Heart right ventricle (tissue), 16 donors: ENCODE measurements at regions of chr7 and their contacts with region 1.

Region 1: GRCh38 chr7:82234457-82235049 is 209.0 kb downstream of the CACNA2D1 start:
- DNase-seq: no peak
- ATAC-seq: peak in 2 of 8 donors; percentile 24 to 38
- H3K4me3 ChIP-seq: no peak overlapping the region
- H3K27ac ChIP-seq: peak overlapping the region in 1 of 10 donors; percentile 28
- H3K4me1 ChIP-seq: peaks cover 0 to 30% (median 11%) of the 10 kb centered on the region in 9 donors
- H3K27me3 ChIP-seq: no peaks in the 10 kb centered on the region
- CTCF ChIP-seq: peak; percentile 46 to 74 (median 55)

Region 2: DNA sequence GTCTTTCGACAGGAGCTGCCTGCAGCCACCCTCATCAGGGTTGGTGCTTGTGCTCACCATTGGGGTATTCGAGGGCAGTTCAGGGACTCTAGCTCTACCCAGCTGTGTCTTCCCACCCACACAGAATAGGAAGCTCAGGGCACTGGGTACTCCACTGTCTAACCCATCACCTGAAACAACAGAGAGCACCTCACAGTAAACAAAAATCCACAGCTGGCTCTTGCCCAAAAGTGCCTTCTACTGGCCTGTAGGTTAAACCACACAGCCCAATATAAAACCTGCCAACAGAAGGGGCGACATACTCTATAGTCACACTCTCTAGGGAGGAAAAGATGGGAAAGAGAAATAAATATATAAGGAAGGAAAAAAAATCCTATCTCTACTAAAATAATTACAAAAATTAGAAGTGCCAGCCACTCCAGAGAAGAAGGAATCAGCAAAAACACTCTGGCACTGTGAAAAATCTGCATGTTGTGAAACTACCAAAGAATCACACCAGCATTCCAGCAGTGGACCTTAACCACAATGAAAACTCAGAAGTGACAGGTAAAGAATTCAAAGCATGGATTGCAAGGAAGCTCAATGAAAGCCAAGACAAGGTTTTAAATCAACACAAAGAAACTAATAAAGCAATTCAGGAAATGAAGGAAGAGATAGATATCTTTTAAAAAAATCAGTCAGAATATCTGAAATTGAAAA is 574.7 kb before region 1 on chr7:
- intact Hi-C with region 1: no loop called
- DNase-seq: no peak
- ATAC-seq: no peak
- H3K4me3 ChIP-seq: no peak overlapping the region
- H3K27ac ChIP-seq: no peak overlapping the region
- H3K4me1 ChIP-seq: no peaks in the 10 kb centered on the region
- H3K27me3 ChIP-seq: no peaks in the 10 kb centered on the region
- CTCF ChIP-seq: no peak

Region 3: DNA sequence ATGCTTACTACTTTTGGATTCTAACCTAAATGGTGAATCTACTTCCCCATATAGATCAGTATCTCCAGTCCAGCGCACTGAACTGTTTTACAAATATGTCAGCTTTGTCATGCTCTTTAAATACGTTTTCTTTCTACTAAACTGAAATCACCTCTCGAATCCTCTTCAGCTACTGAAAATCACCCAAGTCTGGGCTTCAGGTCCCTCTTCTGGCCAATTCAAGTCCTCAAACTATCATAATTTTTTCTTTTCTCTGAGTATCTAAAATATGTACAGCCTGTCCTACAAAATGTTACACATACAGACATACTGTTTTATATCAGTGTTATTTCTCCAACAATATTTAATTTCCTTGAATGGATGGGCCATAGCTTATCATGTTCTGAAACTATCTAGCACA is 124.9 kb after region 1 on chr7:
- intact Hi-C with region 1: loop called in 1 of 10 experiments (anchors 10 kb)
- DNase-seq: no peak
- ATAC-seq: no peak
- H3K4me3 ChIP-seq: no peak overlapping the region
- H3K27ac ChIP-seq: no peak overlapping the region
- H3K4me1 ChIP-seq: peaks cover 3 to 48% (median 15%) of the 10 kb centered on the region in 9 donors
- H3K27me3 ChIP-seq: no peaks in the 10 kb centered on the region
- CTCF ChIP-seq: peak in 3 of 9 donors; percentile 20 to 31 (median 29)